B cell (primary cell): ENCODE measurements at regions of chr6 and their contacts with region 1.

Region 1: GRCh38 chr6:159062564-159062945 is 17.8 kb upstream of the TAGAP start:
- DNase-seq: peak; percentile 86
- ATAC-seq: peak; percentile 90
- H3K4me3 ChIP-seq: peak overlapping the region in 4 of 5 experiments; percentile 7 to 14 (median 8)
- H3K4me3 Mint-ChIP-seq: peak overlapping the region; percentile 72
- H3K27ac ChIP-seq: peak overlapping the region; percentile 93 to 96
- H3K27ac Mint-ChIP-seq: peak overlapping the region; percentile 98
- H3K4me1 ChIP-seq: peaks cover 48% of the 10 kb centered on the region in 2 donors
- H3K4me1 Mint-ChIP-seq: peaks cover 66% of the 10 kb centered on the region
- H3K27me3 ChIP-seq: no peaks in the 10 kb centered on the region
- H3K27me3 Mint-ChIP-seq: no peaks in the 10 kb centered on the region
- CTCF ChIP-seq: no peak

Region 2: GRCh38 chr6:159023893-159024292 is 38.7 kb before region 1 on chr6:
- CTCF ChIA-PET with region 1: no interaction called
- POLR2A ChIA-PET with region 1: no interaction called
- intact Hi-C with region 1: no loop called
- DNase-seq: no peak
- ATAC-seq: no peak
- H3K4me3 ChIP-seq: no peak overlapping the region
- H3K4me3 Mint-ChIP-seq: no peak overlapping the region
- H3K27ac ChIP-seq: no peak overlapping the region
- H3K27ac Mint-ChIP-seq: no peak overlapping the region
- H3K4me1 ChIP-seq: peaks cover 0 to 2% of the 10 kb centered on the region in 2 donors
- H3K4me1 Mint-ChIP-seq: peaks cover 3% of the 10 kb centered on the region
- H3K27me3 ChIP-seq: no peaks in the 10 kb centered on the region
- H3K27me3 Mint-ChIP-seq: no peaks in the 10 kb centered on the region
- CTCF ChIP-seq: no peak

Region 3: GRCh38 chr6:159084493-159085091 is 22.0 kb after region 1 on chr6:
- CTCF ChIA-PET with region 1: interaction called, 23 read pairs
- POLR2A ChIA-PET with region 1: interaction called, 12 read pairs
- intact Hi-C with region 1: loop called (anchors 1 kb)
- DNase-seq: no peak
- ATAC-seq: no peak
- H3K4me3 ChIP-seq: no peak overlapping the region
- H3K4me3 Mint-ChIP-seq: no peak overlapping the region
- H3K27ac ChIP-seq: no peak overlapping the region
- H3K27ac Mint-ChIP-seq: no peak overlapping the region
- H3K4me1 ChIP-seq: peaks cover 32 to 33% of the 10 kb centered on the region in 2 donors
- H3K4me1 Mint-ChIP-seq: peaks cover 27% of the 10 kb centered on the region
- H3K27me3 ChIP-seq: no peaks in the 10 kb centered on the region
- H3K27me3 Mint-ChIP-seq: no peaks in the 10 kb centered on the region
- CTCF ChIP-seq: no peak

Region 4: GRCh38 chr6:159098636-159099106 is 36.1 kb after region 1 on chr6:
- CTCF ChIA-PET with region 1: interaction called, 64 read pairs
- POLR2A ChIA-PET with region 1: interaction called, 23 read pairs
- intact Hi-C with region 1: loop called (anchors 1 kb)
- DNase-seq: peak; percentile 93
- ATAC-seq: peak; percentile 44
- H3K4me3 ChIP-seq: peak overlapping the region in 3 of 5 experiments; percentile 5 to 38 (median 13)
- H3K4me3 Mint-ChIP-seq: peak overlapping the region; percentile 77
- H3K27ac ChIP-seq: peak overlapping the region; percentile 95 to 98
- H3K27ac Mint-ChIP-seq: peak overlapping the region; percentile 93
- H3K4me1 ChIP-seq: peaks cover 77 to 88% of the 10 kb centered on the region in 2 donors
- H3K4me1 Mint-ChIP-seq: peaks cover 92% of the 10 kb centered on the region
- H3K27me3 ChIP-seq: no peaks in the 10 kb centered on the region
- H3K27me3 Mint-ChIP-seq: no peaks in the 10 kb centered on the region
- CTCF ChIP-seq: no peak

Region 5: DNA sequence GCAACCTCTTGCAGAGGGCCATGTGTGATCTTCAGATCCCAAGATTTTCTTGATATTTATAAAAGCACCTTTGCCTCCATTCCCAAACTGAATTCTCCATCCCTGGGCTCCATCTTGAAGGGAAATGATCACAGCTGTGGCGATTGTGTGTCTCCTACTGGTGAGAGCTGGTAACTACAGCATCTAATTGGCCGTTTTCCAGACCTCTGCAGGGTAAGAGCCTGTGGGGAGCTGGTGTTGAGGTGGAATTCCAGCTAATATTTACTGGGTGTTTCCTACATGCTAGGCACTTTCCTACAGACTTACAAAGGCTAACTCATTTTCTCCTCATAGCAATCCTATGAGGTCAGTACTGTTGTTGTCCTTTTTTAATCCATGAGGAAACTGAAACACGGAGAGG is 47.5 kb after region 1 on chr6:
- CTCF ChIA-PET with region 1: interaction called, 64 read pairs
- POLR2A ChIA-PET with region 1: interaction called, 3 read pairs
- intact Hi-C with region 1: no loop called
- DNase-seq: peak; percentile 58
- ATAC-seq: no peak
- H3K4me3 ChIP-seq: no peak overlapping the region
- H3K4me3 Mint-ChIP-seq: peak overlapping the region; percentile 37
- H3K27ac ChIP-seq: peak overlapping the region; percentile 22 to 94
- H3K27ac Mint-ChIP-seq: peak overlapping the region; percentile 82
- H3K4me1 ChIP-seq: peaks cover 89 to 93% of the 10 kb centered on the region in 2 donors
- H3K4me1 Mint-ChIP-seq: peaks cover 85% of the 10 kb centered on the region
- H3K27me3 ChIP-seq: no peaks in the 10 kb centered on the region
- H3K27me3 Mint-ChIP-seq: no peaks in the 10 kb centered on the region
- CTCF ChIP-seq: peak; percentile 81

Region 6: GRCh38 chr6:159116343-159116742 is 53.8 kb after region 1 on chr6:
- CTCF ChIA-PET with region 1: interaction called, 10 read pairs
- POLR2A ChIA-PET with region 1: interaction called, 4 read pairs
- intact Hi-C with region 1: no loop called
- DNase-seq: peak; percentile 93
- ATAC-seq: peak; percentile 84
- H3K4me3 ChIP-seq: peak overlapping the region in 2 of 5 experiments; percentile 0 to 48
- H3K4me3 Mint-ChIP-seq: peak overlapping the region; percentile 88
- H3K27ac ChIP-seq: peak overlapping the region; percentile 99
- H3K27ac Mint-ChIP-seq: peak overlapping the region; percentile 95
- H3K4me1 ChIP-seq: peaks cover 86 to 87% of the 10 kb centered on the region in 2 donors
- H3K4me1 Mint-ChIP-seq: peaks cover 87% of the 10 kb centered on the region
- H3K27me3 ChIP-seq: no peaks in the 10 kb centered on the region
- H3K27me3 Mint-ChIP-seq: no peaks in the 10 kb centered on the region
- CTCF ChIP-seq: no peak